ENCODE measurements at regions of chr15 and their contacts with region 1.

Region 1: DNA sequence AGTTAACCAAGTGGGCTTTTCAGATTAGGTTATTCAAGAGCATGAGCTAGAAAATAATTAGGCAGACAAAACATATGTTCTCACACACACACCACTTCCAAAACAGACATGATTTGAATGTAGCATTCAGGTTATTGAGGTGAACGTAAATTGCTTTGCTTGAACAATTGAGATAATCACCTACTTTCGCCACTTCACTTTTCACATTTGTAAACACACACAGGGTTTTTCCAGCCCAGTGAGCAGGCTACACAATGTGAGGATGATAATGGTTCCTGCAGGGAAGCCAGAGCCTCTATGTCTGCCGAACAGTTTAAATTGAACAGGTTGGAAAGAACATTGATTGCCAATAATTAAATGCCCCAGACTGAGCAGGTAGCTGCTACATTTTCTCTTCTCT is 560.8 kb downstream of the OCA2 start:
- DNase-seq: no peak
- H3K4me3 ChIP-seq: no peak overlapping the region
- H3K27ac ChIP-seq: no peak overlapping the region
- H3K4me1 ChIP-seq: no peaks in the 10 kb centered on the region
- H3K27me3 ChIP-seq: no peaks in the 10 kb centered on the region
- CTCF ChIP-seq: no peak
- EP300 ChIP-seq: no peak
- POLR2A ChIP-seq: no peak

Region 2: GRCh38 chr15:26928051-26928450 is 610.3 kb before region 1 on chr15:
- intact Hi-C with region 1: no loop called
- DNase-seq: no peak
- H3K4me3 ChIP-seq: no peak overlapping the region
- H3K27ac ChIP-seq: no peak overlapping the region
- H3K4me1 ChIP-seq: no peaks in the 10 kb centered on the region
- H3K27me3 ChIP-seq: no peaks in the 10 kb centered on the region
- CTCF ChIP-seq: no peak
- EP300 ChIP-seq: no peak
- POLR2A ChIP-seq: no peak

Region 3: DNA sequence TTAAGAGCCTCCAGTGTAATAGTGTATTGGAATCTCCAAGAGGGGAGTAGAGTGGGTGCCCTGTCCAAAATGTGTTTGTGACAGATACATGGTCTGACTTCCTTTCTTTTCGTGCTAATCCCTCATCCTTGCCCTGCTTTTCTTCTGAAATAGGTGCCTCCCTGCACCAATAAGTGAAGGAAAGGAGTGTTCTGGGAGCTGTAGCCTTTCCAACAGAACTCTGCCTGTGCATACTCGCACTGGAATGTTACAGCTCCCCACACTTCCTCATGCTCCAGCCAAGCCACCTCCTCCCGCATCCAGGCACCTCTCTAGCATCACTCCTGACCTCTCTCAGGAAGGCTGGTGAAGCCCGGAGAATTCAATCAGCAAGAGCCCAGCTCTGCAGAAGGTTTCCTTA is 89.3 kb before region 1 on chr15:
- intact Hi-C with region 1: no loop called
- DNase-seq: no peak
- H3K4me3 ChIP-seq: no peak overlapping the region
- H3K27ac ChIP-seq: no peak overlapping the region
- H3K4me1 ChIP-seq: no peaks in the 10 kb centered on the region
- H3K27me3 ChIP-seq: no peaks in the 10 kb centered on the region
- CTCF ChIP-seq: no peak
- EP300 ChIP-seq: no peak
- POLR2A ChIP-seq: no peak

Region 4: DNA sequence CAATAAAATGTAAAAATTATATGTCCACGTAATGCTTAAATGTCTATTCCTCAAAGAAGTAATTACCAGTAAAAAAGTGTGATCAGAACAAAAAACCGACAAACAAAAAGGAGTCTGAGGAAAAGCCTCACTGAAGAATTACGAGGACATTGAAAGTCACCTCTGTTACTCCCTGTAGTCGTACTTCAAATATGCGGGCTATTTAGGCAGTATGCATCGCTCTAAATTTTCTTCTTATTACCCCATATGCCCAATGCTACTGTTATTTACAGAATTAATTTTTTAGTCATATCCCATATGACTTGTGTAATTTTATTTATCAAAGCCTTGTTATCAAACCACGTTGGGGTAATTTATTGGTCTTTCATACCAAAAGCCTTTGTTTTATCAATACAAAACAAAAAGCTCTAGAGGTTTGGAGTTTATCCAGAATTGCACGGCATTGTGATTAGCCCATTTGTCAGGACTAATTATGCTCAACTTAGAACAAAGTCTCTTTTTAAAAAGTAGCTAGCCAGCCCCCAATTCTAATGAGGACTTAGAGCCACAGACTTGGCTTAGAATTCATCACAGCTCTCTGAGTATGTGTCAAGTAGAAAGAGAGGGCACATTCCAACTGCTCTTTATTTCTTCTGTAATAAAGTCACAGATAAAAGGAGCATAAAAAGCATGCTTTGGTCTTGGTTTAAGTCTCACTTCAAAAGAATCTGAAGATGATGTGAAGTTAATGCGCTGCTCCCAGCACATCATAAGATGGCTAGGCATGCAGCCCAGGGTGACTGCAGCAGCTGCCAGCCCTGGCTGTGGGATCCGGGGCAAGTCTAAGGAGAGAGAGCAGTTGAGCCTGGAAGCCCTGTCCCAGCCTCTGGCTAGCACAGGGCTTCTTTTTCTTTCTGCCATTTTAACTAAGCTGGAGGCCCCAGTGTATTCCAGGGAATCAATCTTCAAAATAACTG is 46.4 kb before region 1 on chr15:
- intact Hi-C with region 1: loop called in 1 of 4 experiments (anchors 1 kb)
- DNase-seq: no peak
- H3K4me3 ChIP-seq: no peak overlapping the region
- H3K27ac ChIP-seq: no peak overlapping the region
- H3K4me1 ChIP-seq: no peaks in the 10 kb centered on the region
- H3K27me3 ChIP-seq: no peaks in the 10 kb centered on the region
- CTCF ChIP-seq: no peak
- EP300 ChIP-seq: no peak
- POLR2A ChIP-seq: no peak

Region 5: GRCh38 chr15:27744641-27745040 is 206.3 kb after region 1 on chr15:
- intact Hi-C with region 1: no loop called
- DNase-seq: no peak
- H3K4me3 ChIP-seq: no peak overlapping the region
- H3K27ac ChIP-seq: no peak overlapping the region
- H3K4me1 ChIP-seq: no peaks in the 10 kb centered on the region
- H3K27me3 ChIP-seq: no peaks in the 10 kb centered on the region
- CTCF ChIP-seq: no peak
- EP300 ChIP-seq: no peak
- POLR2A ChIP-seq: no peak